Aorta (tissue), 5 donors: ENCODE measurements at regions of chr1 and their contacts with region 1.

Region 1: GRCh38 chr1:207470927-207471326 is 16.8 kb downstream of the CR2 start:
- DNase-seq: no peak
- ATAC-seq: no peak
- H3K4me3 ChIP-seq: no peak overlapping the region
- H3K27ac ChIP-seq: no peak overlapping the region
- H3K4me1 ChIP-seq: no peaks in the 10 kb centered on the region
- H3K27me3 ChIP-seq: peaks cover 0 to 5% of the 10 kb centered on the region in 2 donors

Region 2: DNA sequence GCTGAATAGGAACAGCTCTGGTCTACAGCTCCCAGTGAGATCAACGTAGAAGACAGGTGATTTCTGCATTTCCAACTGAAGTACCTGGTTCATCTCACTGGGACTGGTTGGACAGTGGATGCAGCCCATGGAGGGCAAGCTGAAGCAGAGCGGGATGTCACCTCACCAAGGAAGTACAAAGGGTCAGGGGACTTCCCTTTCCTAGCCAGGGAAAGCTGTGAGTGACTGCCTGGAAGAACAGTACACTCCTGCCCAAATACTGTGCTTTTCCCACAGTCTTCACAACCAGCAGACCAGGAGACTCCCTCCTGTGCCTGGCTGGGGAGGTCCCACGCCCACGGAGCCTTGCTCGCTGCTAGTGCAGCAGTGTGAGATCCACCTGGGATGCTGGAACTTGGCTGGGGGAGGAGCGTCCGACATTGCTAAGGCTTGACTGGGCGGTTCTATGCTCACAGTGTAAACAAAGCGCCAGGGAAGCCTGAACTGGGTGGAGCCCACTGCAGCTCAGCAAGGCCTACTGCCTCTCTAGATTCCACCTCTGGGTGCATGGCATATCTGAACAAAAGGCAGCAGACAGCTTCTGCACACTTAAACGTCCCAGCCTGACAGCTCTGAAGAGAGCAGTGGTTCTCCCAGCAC is 188.7 kb after region 1 on chr1:
- intact Hi-C with region 1: loop called in 1 of 2 experiments (anchors 5 kb)
- DNase-seq: no peak
- ATAC-seq: no peak
- H3K4me3 ChIP-seq: no peak overlapping the region
- H3K27ac ChIP-seq: no peak overlapping the region
- H3K4me1 ChIP-seq: no peaks in the 10 kb centered on the region
- H3K27me3 ChIP-seq: no peaks in the 10 kb centered on the region